Upper lobe of right lung (tissue), 1 donor: ENCODE measurements at regions of chr15 and their contacts with region 1.

Region 1: GRCh38 chr15:90394748-90395442 is 6.9 kb downstream of the IQGAP1 start:
- DNase-seq: no peak
- ATAC-seq: peak; percentile 22
- H3K4me3 ChIP-seq: no peak overlapping the region
- H3K27ac ChIP-seq: no peak overlapping the region
- H3K4me1 ChIP-seq: peaks cover 75% of the 10 kb centered on the region
- H3K27me3 ChIP-seq: no peaks in the 10 kb centered on the region
- CTCF ChIP-seq: no peak

Region 2: GRCh38 chr15:90451053-90451850 is 56.4 kb after region 1 on chr15:
- intact Hi-C with region 1: loop called (anchors 10 kb)
- DNase-seq: no peak
- ATAC-seq: no peak
- H3K4me3 ChIP-seq: no peak overlapping the region
- H3K27ac ChIP-seq: no peak overlapping the region
- H3K4me1 ChIP-seq: no peaks in the 10 kb centered on the region
- H3K27me3 ChIP-seq: no peaks in the 10 kb centered on the region
- CTCF ChIP-seq: no peak